ENCODE measurements at regions of chr4 and their contacts with region 1.

Region 1: GRCh38 chr4:112231779-112232713 is at the start of gene AP1AR:
- DNase-seq: peak; percentile 93
- total RNA-seq, gene AP1AR: 13.5 to 21.2 TPM

Region 2: GRCh38 chr4:112099701-112100297 is 132.2 kb before region 1 on chr4:
- intact Hi-C with region 1: loop called (anchors 5 to 10 kb)
- DNase-seq: no peak

Region 3: DNA sequence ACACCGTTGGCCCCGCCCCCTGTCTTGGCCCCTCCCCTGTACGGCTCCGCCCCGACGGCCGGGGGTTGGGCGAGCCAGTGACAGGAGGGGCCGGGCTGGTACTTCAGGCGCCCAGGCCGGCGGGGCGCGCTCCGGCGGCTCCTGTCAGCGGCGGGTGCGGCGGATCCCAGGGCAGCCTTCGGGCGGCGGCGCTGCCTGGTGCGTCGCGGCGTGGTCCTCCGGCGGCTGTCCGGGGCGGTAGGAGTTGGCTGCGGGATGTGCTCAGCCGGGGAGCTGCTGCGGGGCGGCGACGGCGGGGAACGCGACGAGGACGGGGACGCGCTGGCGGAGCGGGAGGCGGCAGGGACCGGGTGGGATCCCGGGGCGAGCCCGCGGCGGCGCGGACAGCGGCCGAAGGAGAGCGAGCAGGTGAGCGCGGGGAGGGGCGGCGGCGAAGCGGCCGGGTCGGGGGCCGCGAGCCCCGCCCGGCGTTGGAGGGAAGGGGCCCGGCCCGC is 86.7 kb before region 1 on chr4 and contains the start of gene FAM241A:
- intact Hi-C with region 1: loop called in 1 of 2 experiments (anchors 5 kb)
- DNase-seq: peak; percentile 95
- total RNA-seq, gene FAM241A: 4.6 to 6.7 TPM